Gastrocnemius medialis (tissue), 4 donors: ENCODE measurements at regions of chr16 and their contacts with region 1.

Region 1: DNA sequence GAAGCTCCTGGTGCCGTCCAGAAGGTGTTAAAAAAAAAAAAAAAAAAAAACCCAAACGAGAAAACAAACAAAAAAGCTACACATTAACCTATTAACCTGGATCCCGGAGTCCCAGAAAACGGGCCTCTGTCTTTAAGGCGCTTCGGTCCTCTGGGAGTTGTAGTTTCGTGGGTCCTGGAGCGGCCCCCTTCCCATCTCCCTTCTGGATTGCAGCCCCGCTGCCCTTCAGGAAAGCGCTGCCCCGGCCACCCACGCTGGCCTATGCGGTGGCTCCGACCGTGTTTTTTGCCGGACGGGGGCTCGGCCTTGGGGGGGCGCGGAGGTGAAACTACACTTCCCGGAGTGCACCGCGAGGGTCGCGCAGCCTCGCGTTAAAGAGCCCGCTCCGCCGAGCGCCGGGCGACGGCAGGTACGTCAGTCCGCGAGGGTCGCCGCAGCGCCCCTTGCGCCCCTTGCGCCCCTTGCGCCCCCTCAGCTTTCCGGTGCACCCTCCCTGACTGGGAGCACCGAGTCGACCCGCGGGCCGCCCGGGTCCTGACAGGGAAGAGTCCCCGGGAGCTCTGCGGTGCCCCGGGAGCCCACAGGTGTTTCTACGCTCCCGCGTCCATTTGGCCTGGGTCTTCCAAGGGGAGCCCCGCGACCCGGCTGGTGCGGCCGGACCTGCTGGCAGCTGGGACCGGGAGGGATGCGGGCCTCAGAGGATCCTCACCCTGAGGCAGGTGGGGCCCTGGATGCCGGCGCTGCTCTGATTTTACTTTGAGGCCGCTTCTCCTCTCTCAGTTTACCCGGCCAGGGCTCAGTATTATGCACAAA is at the start of gene FCSK:
- DNase-seq: peak; percentile 18 to 61
- ATAC-seq: peak; percentile 91 to 96
- H3K4me3 ChIP-seq: peak within 1 kb of the TSS; percentile 62 to 98 (median 86)
- H3K27ac ChIP-seq: peak within 1 kb of the TSS; percentile 92 to 100 (median 96)
- H3K4me1 ChIP-seq: peaks cover 12 to 20% of the 10 kb centered on the region in 2 donors
- H3K27me3 ChIP-seq: no peaks in the 10 kb centered on the region
- CTCF ChIP-seq: peak in 1 of 5 experiments; percentile 11
- POLR2A ChIP-seq: peak; percentile 57 to 62
- total RNA-seq, gene FCSK: 8.0 to 13.5 (median 11.1) TPM

Region 2: DNA sequence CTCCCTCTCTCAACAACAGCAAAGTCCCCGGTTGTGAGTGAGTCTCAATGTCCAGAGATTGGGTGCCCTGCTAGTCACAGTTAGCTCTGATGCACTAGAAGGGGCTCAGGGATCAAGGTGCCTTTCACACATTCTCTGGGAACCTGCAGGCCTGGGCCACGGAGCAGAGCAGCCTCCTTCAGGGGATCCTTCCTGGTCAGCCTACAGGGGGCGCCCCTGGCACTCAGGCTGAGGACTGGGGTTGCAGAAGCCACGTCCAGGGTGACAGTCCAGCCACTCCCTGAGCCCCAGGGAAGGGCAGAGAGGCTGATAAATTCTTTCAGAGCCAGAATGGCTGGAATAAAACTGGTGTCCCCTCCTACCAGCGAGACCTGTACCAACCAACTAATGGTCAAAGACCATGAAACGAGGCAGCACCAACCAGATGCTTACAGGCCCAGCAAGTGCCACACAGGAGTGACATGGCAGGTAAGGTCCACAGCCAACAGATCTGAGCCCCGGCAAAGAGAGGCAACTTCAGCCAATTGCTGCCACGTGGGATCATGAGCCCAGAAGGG is 59.0 kb before region 1 on chr16:
- in situ Hi-C with region 1: loop called in 1 of 4 experiments (anchors 10 kb)
- intact Hi-C with region 1: no loop called
- DNase-seq: peak; percentile 29 to 65
- ATAC-seq: peak in 1 of 2 donors; percentile 47
- H3K4me3 ChIP-seq: no peak overlapping the region
- H3K27ac ChIP-seq: no peak overlapping the region
- H3K4me1 ChIP-seq: peaks cover 19 to 20% of the 10 kb centered on the region in 2 donors
- H3K27me3 ChIP-seq: no peaks in the 10 kb centered on the region
- CTCF ChIP-seq: peak; percentile 60 to 81 (median 69)
- POLR2A ChIP-seq: no peak

Region 3: DNA sequence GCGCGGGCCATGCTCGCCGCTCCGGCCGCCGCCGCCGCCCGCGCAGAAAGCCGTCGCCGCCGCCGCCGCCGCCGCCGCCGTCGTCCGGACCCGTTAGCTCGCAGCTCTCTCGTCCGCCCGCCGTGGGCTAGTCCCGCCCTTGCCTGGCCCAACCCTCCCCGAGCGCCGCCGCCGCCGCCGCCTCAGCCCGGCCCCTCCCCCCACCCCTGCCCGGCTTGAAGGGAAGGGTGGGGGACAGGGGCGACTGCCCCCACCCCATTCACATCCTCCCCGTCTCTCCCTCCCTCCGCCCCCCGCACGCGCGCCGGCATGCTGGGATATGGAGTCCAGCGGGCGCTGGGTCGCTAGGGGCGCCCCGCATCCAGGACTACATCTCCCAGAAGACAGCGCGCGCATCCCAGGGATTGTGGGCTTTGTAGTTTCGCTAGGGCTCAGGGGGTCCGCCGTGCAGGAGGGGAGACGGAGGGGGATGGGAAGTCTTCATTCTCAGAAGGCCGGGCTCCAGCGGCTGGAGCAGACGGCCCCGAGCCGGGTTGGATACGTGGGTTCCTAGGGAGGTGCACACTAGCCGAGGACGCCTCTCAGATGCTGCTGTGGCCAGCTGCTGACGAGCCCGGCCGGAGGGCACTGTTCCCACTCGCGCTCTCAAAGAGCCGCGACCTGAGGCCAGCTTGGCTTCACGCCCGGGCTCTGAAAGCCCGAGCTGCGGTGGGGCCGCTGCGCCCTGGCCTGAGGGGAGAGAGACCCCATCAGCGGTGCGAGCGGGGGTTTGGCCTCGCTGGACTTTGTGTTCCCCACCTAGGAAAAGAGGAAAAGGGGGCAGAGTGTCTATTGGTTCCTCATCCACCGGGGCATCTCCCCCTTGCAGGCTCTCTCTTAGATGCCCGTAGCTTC is 15.2 kb before region 1 on chr16 and contains the start of gene ST3GAL2:
- in situ Hi-C with region 1: no loop called
- intact Hi-C with region 1: loop called (anchors 1 kb)
- DNase-seq: peak; percentile 89 to 94
- ATAC-seq: peak; percentile 89 to 91
- H3K4me3 ChIP-seq: peak within 1 kb of the TSS; percentile 75 to 95 (median 79)
- H3K27ac ChIP-seq: peak within 1 kb of the TSS; percentile 78 to 85 (median 83)
- H3K4me1 ChIP-seq: peaks cover 37 to 46% of the 10 kb centered on the region in 2 donors
- H3K27me3 ChIP-seq: no peaks in the 10 kb centered on the region
- CTCF ChIP-seq: peak in 2 of 5 experiments; percentile 8 to 33
- POLR2A ChIP-seq: peak; percentile 35 to 50
- total RNA-seq, gene ST3GAL2: 12.8 to 27.7 (median 22.1) TPM